Activated B cell treated with CpG ODN at 0.5 μM for 24 hours (primary cell): ENCODE measurements at regions of chr4 and their contacts with region 1.

Region 1: DNA sequence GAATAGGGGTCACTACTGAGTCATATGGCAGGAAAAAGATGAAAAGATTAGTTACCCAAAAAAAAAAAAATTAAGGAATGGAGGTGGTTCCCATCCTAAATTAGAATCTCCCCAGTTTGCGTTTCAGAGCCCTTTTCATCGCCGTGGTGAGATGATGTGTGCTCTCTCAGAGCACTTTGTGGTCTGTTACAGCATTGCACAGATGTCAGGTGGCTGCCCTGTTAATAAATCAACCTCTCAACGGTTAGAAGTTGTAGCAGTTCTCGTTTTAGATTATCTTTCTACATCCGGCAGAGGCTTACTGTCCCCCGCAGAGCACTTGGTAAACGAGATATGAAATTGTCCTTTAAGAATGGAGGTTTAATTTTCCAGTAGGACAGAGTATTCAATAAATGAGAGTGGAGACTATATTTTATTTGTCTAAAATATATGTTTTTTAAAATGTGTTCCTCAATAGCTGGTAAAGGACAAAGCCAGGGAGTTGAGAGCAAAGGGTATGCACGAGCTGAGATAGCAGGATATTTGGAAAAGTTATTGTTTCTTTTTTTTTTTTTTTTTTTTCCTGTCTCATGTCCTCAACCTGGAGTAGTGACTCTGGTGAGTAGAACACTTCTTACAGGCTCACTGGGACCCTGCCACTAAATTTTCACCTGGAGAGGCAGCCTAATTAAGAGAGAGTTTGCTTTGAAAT is 26.9 kb downstream of the AFF1 start:
- DNase-seq: no peak
- ATAC-seq: peak; percentile 89
- H3K4me3 Mint-ChIP-seq: peak overlapping the region; percentile 33
- H3K27ac Mint-ChIP-seq: peak overlapping the region; percentile 82
- H3K4me1 Mint-ChIP-seq: peaks cover 50% of the 10 kb centered on the region
- H3K27me3 Mint-ChIP-seq: no peaks in the 10 kb centered on the region
- CTCF ChIP-seq: no peak

Region 2: DNA sequence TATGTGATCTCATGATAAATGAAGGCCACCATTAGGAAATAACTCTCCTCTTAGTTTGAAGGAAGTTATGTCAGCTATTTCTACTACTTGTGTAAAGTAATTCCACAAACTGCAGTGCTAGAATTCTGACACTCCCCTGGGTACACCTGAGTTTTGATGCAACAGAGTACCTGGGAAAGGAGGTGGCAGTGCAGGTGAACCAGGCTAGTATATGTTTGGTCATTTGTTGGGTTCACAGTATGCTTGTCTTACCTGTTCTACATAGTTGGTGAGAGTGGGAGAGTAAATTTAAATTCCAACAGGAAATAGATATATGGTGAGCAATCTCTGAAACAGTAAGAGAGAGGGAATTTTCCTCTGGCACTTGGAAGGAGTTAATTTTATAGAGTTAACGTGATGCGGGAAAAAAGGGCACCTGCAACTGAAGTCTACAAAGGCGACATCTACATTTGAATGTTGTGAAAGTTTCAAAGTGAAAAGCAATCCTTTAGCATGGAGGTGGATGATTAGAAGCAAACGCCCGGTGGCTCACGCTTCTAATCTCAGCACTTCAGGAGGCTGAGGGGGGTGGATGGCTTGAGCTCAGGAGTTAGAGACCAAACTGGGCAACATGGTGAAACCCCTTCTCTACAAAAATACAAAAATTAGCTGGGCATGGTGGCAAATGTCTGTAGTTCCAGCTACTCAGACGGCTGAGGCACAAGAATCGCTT is 104.3 kb before region 1 on chr4:
- CTCF ChIA-PET with region 1: no interaction called
- POLR2A ChIA-PET with region 1: no interaction called
- intact Hi-C with region 1: no loop called
- DNase-seq: no peak
- ATAC-seq: no peak
- H3K4me3 Mint-ChIP-seq: no peak overlapping the region
- H3K27ac Mint-ChIP-seq: no peak overlapping the region
- H3K4me1 Mint-ChIP-seq: no peaks in the 10 kb centered on the region
- H3K27me3 Mint-ChIP-seq: no peaks in the 10 kb centered on the region
- CTCF ChIP-seq: no peak

Region 3: GRCh38 chr4:86944964-86945781 is 16.6 kb before region 1 on chr4:
- CTCF ChIA-PET with region 1: no interaction called
- POLR2A ChIA-PET with region 1: interaction called, 11 read pairs
- intact Hi-C with region 1: no loop called
- DNase-seq: no peak
- ATAC-seq: no peak
- H3K4me3 Mint-ChIP-seq: no peak overlapping the region
- H3K27ac Mint-ChIP-seq: no peak overlapping the region
- H3K4me1 Mint-ChIP-seq: peaks cover 57% of the 10 kb centered on the region
- H3K27me3 Mint-ChIP-seq: no peaks in the 10 kb centered on the region
- CTCF ChIP-seq: no peak

Region 4: GRCh38 chr4:86977621-86978184 is 16.0 kb after region 1 on chr4:
- CTCF ChIA-PET with region 1: no interaction called
- POLR2A ChIA-PET with region 1: interaction called, 4 read pairs
- intact Hi-C with region 1: loop called (anchors 2 kb)
- DNase-seq: no peak
- ATAC-seq: peak; percentile 51
- H3K4me3 Mint-ChIP-seq: no peak overlapping the region
- H3K27ac Mint-ChIP-seq: no peak overlapping the region
- H3K4me1 Mint-ChIP-seq: peaks cover 50% of the 10 kb centered on the region
- H3K27me3 Mint-ChIP-seq: no peaks in the 10 kb centered on the region
- CTCF ChIP-seq: no peak

Region 5: DNA sequence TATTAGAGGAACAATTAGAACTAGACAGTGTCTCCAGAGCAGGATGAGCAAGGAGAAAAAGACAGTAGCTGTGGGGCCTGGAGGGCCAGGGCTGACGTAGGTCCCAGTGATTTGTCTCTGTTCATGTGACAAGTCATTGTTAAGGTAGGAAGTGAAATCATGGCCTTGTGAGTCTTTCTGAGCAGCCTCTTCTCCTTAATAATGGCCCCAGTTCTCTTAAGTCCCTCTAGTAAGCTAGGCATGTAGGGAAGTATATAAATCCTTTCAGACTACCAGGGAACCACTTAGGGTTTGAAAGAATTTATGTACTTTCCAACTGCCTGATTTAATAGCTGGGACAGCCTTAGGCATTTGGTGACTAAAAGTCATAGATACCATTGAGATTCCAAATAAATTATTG is 125.7 kb after region 1 on chr4:
- CTCF ChIA-PET with region 1: no interaction called
- POLR2A ChIA-PET with region 1: no interaction called
- intact Hi-C with region 1: no loop called
- DNase-seq: no peak
- ATAC-seq: no peak
- H3K4me3 Mint-ChIP-seq: no peak overlapping the region
- H3K27ac Mint-ChIP-seq: no peak overlapping the region
- H3K4me1 Mint-ChIP-seq: peaks cover 7% of the 10 kb centered on the region
- H3K27me3 Mint-ChIP-seq: no peaks in the 10 kb centered on the region
- CTCF ChIP-seq: no peak